ENCODE measurements at regions of chr7 and their contacts with region 1.

Region 1: DNA sequence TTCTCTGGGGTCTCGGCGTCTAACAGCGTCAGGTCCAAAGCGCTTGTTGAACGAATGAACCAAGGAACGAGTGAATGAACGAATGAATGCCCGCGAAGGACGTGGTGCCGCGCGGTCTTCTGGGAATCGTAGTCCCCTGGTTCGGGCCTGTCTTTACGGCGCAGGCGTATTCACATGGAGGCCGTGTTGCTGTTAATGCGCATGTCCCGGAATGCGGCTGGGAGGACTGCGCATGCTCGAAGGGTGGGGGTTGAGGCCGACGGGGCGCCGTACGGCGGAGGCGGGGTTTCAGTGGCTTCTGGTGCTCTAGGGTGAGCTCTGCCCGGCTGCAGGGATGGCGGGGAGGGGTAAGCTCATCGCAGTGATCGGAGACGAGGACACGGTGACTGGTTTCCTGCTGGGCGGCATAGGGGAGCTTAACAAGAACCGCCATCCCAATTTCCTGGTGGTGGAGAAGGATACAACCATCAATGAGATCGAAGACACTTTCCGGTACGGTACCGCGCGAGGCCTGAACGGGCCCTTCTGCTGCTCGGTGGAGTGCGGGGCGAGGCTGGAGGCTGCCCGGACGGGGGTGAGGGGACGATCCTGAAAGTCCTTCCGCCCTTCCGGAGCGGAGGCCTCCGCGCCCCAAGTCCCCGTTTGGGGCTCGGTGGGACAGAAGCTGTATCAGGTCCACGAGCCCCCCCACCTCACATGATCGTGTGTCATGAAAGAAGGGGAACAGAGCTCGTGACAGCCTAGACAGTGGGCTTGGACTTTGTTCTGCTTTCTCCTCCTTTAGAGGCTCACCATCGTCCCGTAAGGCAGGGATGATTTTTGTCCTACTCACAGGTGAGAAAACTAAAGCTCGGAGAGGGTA is at the start of gene ATP6V1F:
- DNase-seq: peak; percentile 97 to 100 (median 99)
- ATAC-seq: peak; percentile 93
- H3K4me3 ChIP-seq: peak within 1 kb of the TSS; percentile 88
- H3K4me3 Mint-ChIP-seq: peak within 1 kb of the TSS; percentile 88 to 100 (median 98)
- H3K27ac ChIP-seq: peak within 1 kb of the TSS; percentile 76
- H3K27ac Mint-ChIP-seq: peak within 1 kb of the TSS; percentile 86 to 99 (median 93)
- H3K4me1 ChIP-seq: peaks cover 12 to 15% of the 10 kb centered on the region in 2 donors
- H3K4me1 Mint-ChIP-seq: peaks cover 21 to 38% (median 33%) of the 10 kb centered on the region in 7 donors
- H3K27me3 ChIP-seq: no peaks in the 10 kb centered on the region
- H3K27me3 Mint-ChIP-seq: peaks cover 0 to 3% (median 0%) of the 10 kb centered on the region in 5 donors
- total RNA-seq, gene ATP6V1F: 58.4 to 116 (median 79.1) TPM

Region 2: GRCh38 chr7:128343554-128344430 is 519.0 kb before region 1 on chr7 and contains the start of gene RBM28:
- CTCF ChIA-PET with region 1: no interaction called
- POLR2A ChIA-PET with region 1: no interaction called
- intact Hi-C with region 1: loop called in 1 of 2 experiments (anchors 1 kb)
- DNase-seq: peak; percentile 80 to 93 (median 90)
- ATAC-seq: peak; percentile 98
- H3K4me3 ChIP-seq: peak within 1 kb of the TSS; percentile 97
- H3K4me3 Mint-ChIP-seq: peak within 1 kb of the TSS; percentile 89 to 98 (median 96)
- H3K27ac ChIP-seq: peak within 1 kb of the TSS; percentile 83
- H3K27ac Mint-ChIP-seq: peak within 1 kb of the TSS; percentile 83 to 96 (median 93)
- H3K4me1 ChIP-seq: peaks cover 16 to 20% of the 10 kb centered on the region in 2 donors
- H3K4me1 Mint-ChIP-seq: peaks cover 19 to 44% (median 34%) of the 10 kb centered on the region in 7 donors
- H3K27me3 ChIP-seq: no peaks in the 10 kb centered on the region
- H3K27me3 Mint-ChIP-seq: peaks cover 0 to 15% (median 7%) of the 10 kb centered on the region in 5 donors
- total RNA-seq, gene RBM28: 30.1 to 51.0 (median 43.5) TPM

Region 3: DNA sequence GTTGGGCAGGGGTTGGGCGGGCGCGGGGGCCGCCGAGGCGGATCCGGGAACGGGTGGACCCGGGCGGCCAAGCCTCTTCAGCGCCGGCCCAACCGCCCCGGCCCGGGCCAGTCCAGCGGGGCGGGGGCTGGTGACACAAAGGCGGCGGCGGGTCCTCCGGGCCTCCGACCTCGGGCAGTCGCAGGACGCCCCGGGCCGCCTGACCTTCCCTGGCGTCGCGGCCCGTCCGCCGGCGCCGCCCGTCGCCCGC is 332.0 kb before region 1 on chr7:
- CTCF ChIA-PET with region 1: no interaction called
- POLR2A ChIA-PET with region 1: no interaction called
- intact Hi-C with region 1: loop called in 1 of 2 experiments (anchors 10 kb)
- DNase-seq: no peak
- ATAC-seq: no peak
- H3K4me3 ChIP-seq: peak overlapping the region; percentile 46
- H3K4me3 Mint-ChIP-seq: peak overlapping the region in 1 of 10 donors; percentile 16
- H3K27ac ChIP-seq: peak overlapping the region; percentile 95
- H3K27ac Mint-ChIP-seq: no peak overlapping the region
- H3K4me1 ChIP-seq: peaks cover 0 to 4% of the 10 kb centered on the region in 2 donors
- H3K4me1 Mint-ChIP-seq: peaks cover 23 to 42% (median 40%) of the 10 kb centered on the region in 7 donors
- H3K27me3 ChIP-seq: no peaks in the 10 kb centered on the region
- H3K27me3 Mint-ChIP-seq: no peaks in the 10 kb centered on the region

Region 4: GRCh38 chr7:128841921-128842651 is 20.7 kb before region 1 on chr7:
- CTCF ChIA-PET with region 1: interaction called, 3 read pairs
- POLR2A ChIA-PET with region 1: no interaction called
- intact Hi-C with region 1: loop called (anchors 1 kb)
- DNase-seq: peak in 8 of 9 donors; percentile 23 to 66 (median 48)
- ATAC-seq: peak; percentile 74
- H3K4me3 ChIP-seq: no peak overlapping the region
- H3K4me3 Mint-ChIP-seq: no peak overlapping the region
- H3K27ac ChIP-seq: no peak overlapping the region
- H3K27ac Mint-ChIP-seq: peak overlapping the region in 1 of 9 donors; percentile 25
- H3K4me1 ChIP-seq: no peaks in the 10 kb centered on the region
- H3K4me1 Mint-ChIP-seq: peaks cover 0 to 2% (median 0%) of the 10 kb centered on the region in 7 donors
- H3K27me3 ChIP-seq: no peaks in the 10 kb centered on the region
- H3K27me3 Mint-ChIP-seq: no peaks in the 10 kb centered on the region

Region 5: DNA sequence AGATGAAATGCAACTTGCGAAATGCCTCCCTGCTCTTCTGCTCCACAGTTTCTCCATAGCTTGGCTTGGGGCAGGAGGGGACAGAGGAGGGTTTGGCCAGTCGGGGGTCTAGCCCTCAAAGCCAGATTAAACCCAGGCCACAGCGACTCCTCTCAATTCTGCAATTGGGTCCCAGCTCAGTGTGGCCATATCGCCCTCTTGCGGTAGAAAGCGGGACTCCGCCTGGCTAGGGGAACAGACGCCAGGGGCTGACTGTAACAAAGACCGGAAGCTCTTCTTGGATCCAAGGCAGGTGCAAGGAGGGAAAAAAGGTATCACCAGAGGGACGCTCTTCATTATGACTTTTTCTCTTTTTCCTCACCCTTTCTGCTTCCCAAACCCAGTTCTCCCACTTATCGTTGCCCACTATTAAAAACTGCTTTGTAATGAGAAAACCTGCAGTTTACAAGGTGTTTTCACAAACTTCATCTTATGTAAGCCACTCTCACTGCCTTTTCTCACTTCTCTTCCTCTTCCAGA is 228.7 kb after region 1 on chr7:
- CTCF ChIA-PET with region 1: no interaction called
- POLR2A ChIA-PET with region 1: no interaction called
- intact Hi-C with region 1: loop called in 1 of 2 experiments (anchors 1 kb)
- DNase-seq: peak; percentile 69 to 91 (median 79)
- ATAC-seq: peak; percentile 94
- H3K4me3 ChIP-seq: no peak overlapping the region
- H3K4me3 Mint-ChIP-seq: peak overlapping the region in 1 of 10 donors; percentile 49
- H3K27ac ChIP-seq: no peak overlapping the region
- H3K27ac Mint-ChIP-seq: peak overlapping the region in 5 of 9 donors; percentile 34 to 86 (median 46)
- H3K4me1 ChIP-seq: peaks cover 0 to 16% of the 10 kb centered on the region in 2 donors
- H3K4me1 Mint-ChIP-seq: peaks cover 14 to 35% (median 26%) of the 10 kb centered on the region in 7 donors
- H3K27me3 ChIP-seq: no peaks in the 10 kb centered on the region
- H3K27me3 Mint-ChIP-seq: no peaks in the 10 kb centered on the region

Measured in naive thymus-derived CD4-positive, alpha-beta T cell (primary cell).